A549 (cell line): ENCODE measurements at regions of chr7 and their contacts with region 1.

Region 1: GRCh38 chr7:93622036-93623033 is 47.8 kb upstream of the CALCR start:
- DNase-seq: peak; percentile 52 to 66
- ATAC-seq: peak; percentile 99 to 100
- H3K4me3 ChIP-seq: peak overlapping the region; percentile 38
- H3K27ac ChIP-seq: peak overlapping the region; percentile 19 to 50; a peak in 2 of 6 replicates
- H3K4me1 ChIP-seq: 0 out of 3 replicates have a peak, but pooled peaks cover 3% of the 10 kb centered on the region
- CTCF ChIP-seq: peak; percentile 69
- EP300 ChIP-seq: no peak
- POLR2A ChIP-seq: no peak
- RAD21 ChIP-seq: peak; percentile 58 to 62

Region 2: GRCh38 chr7:93632371-93632770 is 10.0 kb after region 1 on chr7:
- CTCF ChIA-PET with region 1: interaction called, 19 read pairs
- POLR2A ChIA-PET with region 1: no interaction called
- DNase-seq: no peak
- ATAC-seq: no peak
- H3K4me3 ChIP-seq: no peak overlapping the region
- H3K27ac ChIP-seq: no peak overlapping the region
- H3K4me1 ChIP-seq: no peaks in the 10 kb centered on the region
- CTCF ChIP-seq: no peak
- EP300 ChIP-seq: no peak
- POLR2A ChIP-seq: no peak
- RAD21 ChIP-seq: no peak

Region 3: DNA sequence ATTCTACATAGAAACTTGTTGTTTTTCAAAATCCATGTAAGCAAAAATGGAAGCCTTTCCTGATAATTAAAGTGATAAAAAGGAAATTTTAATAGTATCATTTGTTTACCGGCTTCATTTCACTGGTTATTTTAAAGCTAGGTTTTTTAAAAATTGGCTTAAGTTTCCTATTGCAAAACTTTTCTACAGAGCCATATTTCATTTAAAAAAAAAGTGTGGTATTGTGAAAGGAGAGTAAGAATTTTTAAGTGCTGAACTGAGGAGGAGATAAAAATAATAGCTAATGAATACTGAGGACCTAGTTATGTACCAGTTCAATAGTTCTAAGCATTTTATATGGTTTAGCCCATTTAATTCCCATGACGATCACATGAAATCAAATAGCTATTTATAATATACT is 600.2 kb after region 1 on chr7:
- CTCF ChIA-PET with region 1: interaction called, 10 read pairs
- POLR2A ChIA-PET with region 1: no interaction called
- DNase-seq: no peak
- ATAC-seq: no peak
- H3K4me3 ChIP-seq: no peak overlapping the region
- H3K27ac ChIP-seq: no peak overlapping the region
- H3K4me1 ChIP-seq: peaks cover 10% of the 10 kb centered on the region; the same call in 2 of the 3 replicates
- CTCF ChIP-seq: no peak
- EP300 ChIP-seq: no peak
- POLR2A ChIP-seq: no peak
- RAD21 ChIP-seq: no peak